Heart right ventricle (tissue), 16 donors: ENCODE measurements at regions of chr10 and their contacts with region 1.

Region 1: DNA sequence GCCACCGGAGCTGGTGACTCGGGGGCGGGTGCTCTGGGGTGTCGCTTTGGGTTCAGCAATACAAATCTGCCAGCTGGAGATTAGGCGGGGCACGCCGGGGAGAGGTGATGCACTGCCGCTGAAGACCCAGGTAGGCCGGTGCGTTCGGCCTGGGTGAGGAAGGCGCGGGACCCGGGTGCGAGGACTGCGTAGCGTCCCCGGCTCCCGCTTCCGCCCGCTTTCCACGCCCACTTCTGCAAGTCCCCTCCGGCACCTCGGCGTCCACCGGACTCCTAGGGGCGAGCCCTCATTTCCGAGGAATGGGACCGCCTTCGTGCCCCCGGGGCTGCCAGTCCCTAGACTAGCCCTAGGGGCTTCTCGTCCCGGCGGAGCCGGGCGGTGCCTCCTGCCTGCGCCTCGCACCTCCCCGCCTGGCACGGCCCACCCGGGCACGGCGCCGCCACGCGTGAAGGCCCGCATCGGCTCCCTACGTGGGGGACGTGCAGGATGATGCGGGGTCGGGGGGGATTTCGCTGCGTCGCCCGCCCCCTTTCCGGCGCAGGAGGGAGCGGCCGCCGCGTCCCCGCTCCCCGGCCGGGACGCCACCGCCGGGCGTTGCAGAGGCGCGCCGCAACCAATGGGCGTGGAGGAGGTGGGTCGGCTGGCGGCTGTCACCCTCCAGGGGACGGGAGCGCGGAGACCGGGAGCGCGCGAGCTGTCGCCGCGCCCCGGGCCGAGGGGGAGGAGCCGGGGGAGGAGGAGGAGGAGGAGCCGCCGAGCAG is 40.0 kb downstream of the HK1 start:
- DNase-seq: peak; percentile 92 to 93
- ATAC-seq: peak; percentile 94 to 97 (median 96)
- H3K4me3 ChIP-seq: peak overlapping the region; percentile 68 to 100 (median 91)
- H3K27ac ChIP-seq: peak overlapping the region; percentile 79 to 99 (median 95)
- H3K4me1 ChIP-seq: peaks cover 4 to 65% (median 38%) of the 10 kb centered on the region in 9 donors
- H3K27me3 ChIP-seq: no peaks in the 10 kb centered on the region
- CTCF ChIP-seq: peak in 3 of 9 donors; percentile 8 to 27 (median 16)

Region 2: GRCh38 chr10:69172241-69172982 is 145.9 kb before region 1 on chr10:
- intact Hi-C with region 1: no loop called
- DNase-seq: no peak
- ATAC-seq: no peak
- H3K4me3 ChIP-seq: no peak overlapping the region
- H3K27ac ChIP-seq: no peak overlapping the region
- H3K4me1 ChIP-seq: peaks cover 0 to 11% (median 0%) of the 10 kb centered on the region in 9 donors
- H3K27me3 ChIP-seq: no peaks in the 10 kb centered on the region
- CTCF ChIP-seq: no peak

Region 3: DNA sequence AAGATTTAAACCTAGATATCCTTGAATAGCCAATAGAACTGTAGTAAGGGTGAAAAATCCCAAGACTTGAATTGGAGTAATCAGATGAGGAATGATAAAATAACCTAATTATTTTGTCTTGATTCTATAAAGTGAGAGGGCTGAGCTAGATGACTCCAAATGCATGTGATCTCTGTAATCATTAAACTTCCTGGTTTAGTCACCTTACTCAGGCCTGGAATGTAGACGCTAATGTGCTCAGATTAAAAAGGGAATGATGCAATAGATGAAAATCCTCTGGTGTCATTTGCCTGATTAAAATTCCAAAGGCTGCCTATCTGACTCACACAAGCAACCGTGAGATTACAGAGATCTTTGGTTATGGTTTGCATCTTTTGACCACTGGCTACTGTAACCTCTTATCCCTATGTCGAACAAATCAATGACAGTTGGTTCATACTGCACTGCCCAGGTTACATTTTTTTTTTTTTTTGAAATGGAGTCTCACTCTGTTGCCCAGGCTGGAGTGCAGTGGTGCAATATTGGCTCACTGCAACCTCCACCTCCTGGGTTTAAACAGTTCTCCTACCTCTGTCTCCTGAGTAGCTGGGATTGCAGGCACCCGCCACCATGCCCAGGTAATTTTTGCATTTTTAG is 101.0 kb before region 1 on chr10:
- intact Hi-C with region 1: no loop called
- DNase-seq: no peak
- ATAC-seq: no peak
- H3K4me3 ChIP-seq: no peak overlapping the region
- H3K27ac ChIP-seq: no peak overlapping the region
- H3K4me1 ChIP-seq: peaks cover 0 to 44% (median 0%) of the 10 kb centered on the region in 9 donors
- H3K27me3 ChIP-seq: peaks cover 0 to 21% (median 0%) of the 10 kb centered on the region in 7 donors
- CTCF ChIP-seq: no peak

Region 4: DNA sequence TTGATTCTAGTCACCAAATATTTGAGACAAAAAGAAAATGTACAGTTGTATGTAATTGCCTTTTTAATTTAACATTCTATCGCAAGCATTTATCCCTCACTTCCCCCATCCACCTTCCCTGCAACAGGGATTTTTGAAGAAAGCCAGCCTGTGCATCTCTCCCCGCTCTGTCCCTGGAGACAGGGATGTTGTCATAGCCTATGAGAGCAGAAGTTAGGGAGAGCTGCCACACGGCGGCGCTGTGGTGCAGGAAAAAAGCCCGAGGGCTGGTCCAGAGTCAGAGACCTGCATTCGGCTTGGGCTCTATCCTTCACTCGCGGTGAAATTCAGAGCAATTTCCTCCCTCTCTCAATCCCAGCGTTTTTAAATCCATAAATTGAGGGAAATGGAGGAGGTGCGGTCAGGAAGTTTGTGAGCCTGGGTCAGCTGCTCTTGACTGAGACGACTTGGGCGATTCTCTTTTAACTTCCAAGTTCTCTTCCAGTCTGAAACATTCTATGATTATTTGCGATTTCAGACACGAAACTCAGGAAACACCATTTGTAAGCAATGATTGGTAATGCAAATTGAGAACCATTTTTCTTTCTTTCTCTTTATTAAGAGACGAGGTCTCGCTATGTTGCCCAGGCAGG is 80.6 kb before region 1 on chr10:
- intact Hi-C with region 1: loop called in 4 of 10 experiments (anchors 2 to 10 kb)
- DNase-seq: peak; percentile 88 to 91
- ATAC-seq: peak; percentile 95 to 100 (median 98)
- H3K4me3 ChIP-seq: no peak overlapping the region
- H3K27ac ChIP-seq: no peak overlapping the region
- H3K4me1 ChIP-seq: peaks cover 0 to 19% (median 4%) of the 10 kb centered on the region in 9 donors
- H3K27me3 ChIP-seq: no peaks in the 10 kb centered on the region
- CTCF ChIP-seq: peak; percentile 76 to 96 (median 93)

Region 5: DNA sequence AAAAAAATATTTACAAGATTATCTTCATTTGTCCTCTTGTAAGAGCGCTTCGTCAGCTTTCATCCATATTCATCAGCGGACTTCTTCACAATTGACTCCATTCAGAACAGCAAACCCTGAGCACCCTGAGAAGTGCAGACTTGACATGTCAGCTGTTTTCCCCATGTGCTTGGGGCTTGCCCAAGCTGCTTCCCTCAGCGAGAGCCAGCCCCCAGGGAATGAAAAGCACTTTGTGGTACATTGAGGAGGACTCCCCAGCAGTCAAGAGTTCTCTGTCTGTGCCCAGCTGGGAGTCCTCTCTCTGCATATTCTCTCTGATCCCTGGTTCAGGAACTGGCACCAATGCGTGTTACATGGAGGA is 75.5 kb before region 1 on chr10:
- intact Hi-C with region 1: loop called in 4 of 10 experiments (anchors 2 to 10 kb)
- DNase-seq: no peak
- ATAC-seq: no peak
- H3K4me3 ChIP-seq: no peak overlapping the region
- H3K27ac ChIP-seq: no peak overlapping the region
- H3K4me1 ChIP-seq: peaks cover 0 to 14% (median 2%) of the 10 kb centered on the region in 9 donors
- H3K27me3 ChIP-seq: no peaks in the 10 kb centered on the region
- CTCF ChIP-seq: no peak

Region 6: GRCh38 chr10:69360485-69361324 is 42.4 kb after region 1 on chr10:
- intact Hi-C with region 1: loop called in 5 of 10 experiments (anchors 2 to 5 kb)
- DNase-seq: peak; percentile 64 to 72
- ATAC-seq: peak; percentile 31 to 83 (median 78)
- H3K4me3 ChIP-seq: no peak overlapping the region
- H3K27ac ChIP-seq: peak overlapping the region; percentile 31 to 83 (median 54)
- H3K4me1 ChIP-seq: peaks cover 37 to 76% (median 68%) of the 10 kb centered on the region in 9 donors
- H3K27me3 ChIP-seq: no peaks in the 10 kb centered on the region
- CTCF ChIP-seq: no peak

Region 7: DNA sequence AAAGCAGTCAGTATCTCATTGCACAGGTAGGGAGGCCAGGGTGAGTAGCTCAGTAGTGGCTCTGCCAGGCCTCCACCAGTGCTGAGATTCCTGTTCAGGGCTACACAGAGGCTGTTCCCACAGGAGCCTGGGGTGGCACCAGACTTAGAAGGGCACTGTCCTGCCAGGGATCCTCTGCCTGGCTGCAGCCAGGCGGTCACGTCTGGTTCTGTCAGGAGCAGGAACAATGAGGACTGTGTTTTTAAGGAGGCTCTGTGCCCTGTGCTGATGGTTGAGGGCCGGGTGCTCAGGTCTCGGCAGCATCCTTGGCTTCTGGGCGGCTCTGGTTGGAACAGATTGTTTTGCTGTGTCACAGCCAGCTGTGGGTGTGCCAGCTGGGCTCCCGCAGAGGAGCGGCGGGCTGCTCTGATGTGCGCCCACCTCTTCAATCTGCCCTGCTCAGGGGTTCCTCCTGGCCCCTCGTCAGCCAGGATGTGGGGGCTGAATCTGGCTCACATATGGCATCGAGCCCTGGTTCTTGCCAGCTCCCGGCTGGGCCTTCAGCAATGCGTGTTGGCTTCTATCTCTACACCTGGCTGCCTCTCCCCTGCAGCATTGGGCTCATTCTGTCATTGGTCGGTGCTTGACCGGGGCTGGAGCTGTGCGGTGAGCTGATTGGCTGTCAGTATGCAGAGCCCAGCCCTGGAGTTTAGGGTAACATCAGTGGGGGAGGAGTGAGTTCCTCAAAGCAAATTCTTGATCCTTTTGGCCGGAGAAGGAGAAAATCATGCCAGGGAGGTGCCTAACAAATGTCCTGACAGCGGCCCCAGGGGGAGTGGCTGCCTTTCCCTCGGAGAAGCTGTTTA is 57.2 kb after region 1 on chr10:
- intact Hi-C with region 1: loop called in 7 of 10 experiments (anchors 5 to 10 kb)
- DNase-seq: peak; percentile 45 to 51
- ATAC-seq: peak; percentile 64 to 83 (median 74)
- H3K4me3 ChIP-seq: no peak overlapping the region
- H3K27ac ChIP-seq: peak overlapping the region in 9 of 10 donors; percentile 14 to 84 (median 59)
- H3K4me1 ChIP-seq: peaks cover 23 to 50% (median 38%) of the 10 kb centered on the region in 9 donors
- H3K27me3 ChIP-seq: no peaks in the 10 kb centered on the region
- CTCF ChIP-seq: no peak

Region 8: GRCh38 chr10:69392481-69393000 is 74.3 kb after region 1 on chr10:
- intact Hi-C with region 1: loop called in 4 of 10 experiments (anchors 2 to 10 kb)
- DNase-seq: peak; percentile 83 to 89
- ATAC-seq: peak; percentile 88 to 94 (median 90)
- H3K4me3 ChIP-seq: no peak overlapping the region
- H3K27ac ChIP-seq: peak overlapping the region in 3 of 10 donors; percentile 11 to 57 (median 38)
- H3K4me1 ChIP-seq: peaks cover 8 to 45% (median 28%) of the 10 kb centered on the region in 9 donors
- H3K27me3 ChIP-seq: no peaks in the 10 kb centered on the region
- CTCF ChIP-seq: peak; percentile 92 to 98 (median 96)

Region 9: DNA sequence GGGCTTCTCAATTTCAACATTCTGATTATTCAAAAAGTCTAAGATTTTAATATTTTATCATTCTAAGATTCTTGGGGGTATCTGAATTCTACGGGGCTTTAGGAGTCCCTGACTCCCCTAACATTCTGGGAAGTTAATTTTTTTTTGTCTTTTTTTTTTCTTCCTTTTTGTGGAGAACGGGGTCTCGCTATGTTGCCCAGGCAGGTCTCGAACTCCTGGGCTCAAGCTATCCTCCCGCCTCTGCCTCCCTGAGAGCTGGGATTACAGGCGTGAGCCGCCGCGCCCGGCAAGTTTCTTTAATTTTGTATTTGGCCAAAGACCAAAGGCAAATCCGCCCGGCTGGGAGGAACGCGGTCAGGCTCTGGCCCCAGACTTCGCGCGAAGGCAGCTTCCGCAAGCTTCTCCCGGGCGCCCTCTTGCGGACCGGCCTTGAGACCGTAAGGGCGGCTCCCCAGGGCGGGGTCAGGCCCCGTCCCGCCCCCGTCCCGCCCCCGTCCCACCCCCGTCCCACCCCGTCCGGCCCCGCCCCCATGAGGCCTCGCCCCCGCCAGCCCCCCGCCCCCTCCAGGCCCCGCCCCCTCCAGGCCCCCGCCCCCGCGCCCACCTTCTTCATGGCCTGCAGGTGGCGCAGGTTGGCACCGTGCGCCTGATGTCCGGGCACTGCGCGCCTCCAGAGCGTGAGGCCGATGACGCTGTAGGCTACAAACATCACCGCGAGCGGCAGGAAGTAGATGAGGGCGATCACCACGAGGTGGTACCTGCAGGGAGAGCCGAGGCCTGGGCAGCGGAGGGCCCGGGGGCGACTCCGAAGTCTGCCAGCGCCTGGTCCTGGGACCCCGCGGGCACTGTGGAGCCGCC is 90.3 kb after region 1 on chr10:
- intact Hi-C with region 1: loop called in 2 of 10 experiments (anchors 5 kb)
- DNase-seq: peak; percentile 96
- ATAC-seq: peak; percentile 83 to 92 (median 90)
- H3K4me3 ChIP-seq: peak overlapping the region in 9 of 10 donors; percentile 31 to 61 (median 48)
- H3K27ac ChIP-seq: peak overlapping the region; percentile 79 to 94 (median 85)
- H3K4me1 ChIP-seq: peaks cover 20 to 63% (median 57%) of the 10 kb centered on the region in 9 donors
- H3K27me3 ChIP-seq: no peaks in the 10 kb centered on the region
- CTCF ChIP-seq: peak; percentile 74 to 98 (median 89)